Heart left ventricle (tissue), 16 donors: ENCODE measurements at regions of chr1 and their contacts with region 1.

Region 1: DNA sequence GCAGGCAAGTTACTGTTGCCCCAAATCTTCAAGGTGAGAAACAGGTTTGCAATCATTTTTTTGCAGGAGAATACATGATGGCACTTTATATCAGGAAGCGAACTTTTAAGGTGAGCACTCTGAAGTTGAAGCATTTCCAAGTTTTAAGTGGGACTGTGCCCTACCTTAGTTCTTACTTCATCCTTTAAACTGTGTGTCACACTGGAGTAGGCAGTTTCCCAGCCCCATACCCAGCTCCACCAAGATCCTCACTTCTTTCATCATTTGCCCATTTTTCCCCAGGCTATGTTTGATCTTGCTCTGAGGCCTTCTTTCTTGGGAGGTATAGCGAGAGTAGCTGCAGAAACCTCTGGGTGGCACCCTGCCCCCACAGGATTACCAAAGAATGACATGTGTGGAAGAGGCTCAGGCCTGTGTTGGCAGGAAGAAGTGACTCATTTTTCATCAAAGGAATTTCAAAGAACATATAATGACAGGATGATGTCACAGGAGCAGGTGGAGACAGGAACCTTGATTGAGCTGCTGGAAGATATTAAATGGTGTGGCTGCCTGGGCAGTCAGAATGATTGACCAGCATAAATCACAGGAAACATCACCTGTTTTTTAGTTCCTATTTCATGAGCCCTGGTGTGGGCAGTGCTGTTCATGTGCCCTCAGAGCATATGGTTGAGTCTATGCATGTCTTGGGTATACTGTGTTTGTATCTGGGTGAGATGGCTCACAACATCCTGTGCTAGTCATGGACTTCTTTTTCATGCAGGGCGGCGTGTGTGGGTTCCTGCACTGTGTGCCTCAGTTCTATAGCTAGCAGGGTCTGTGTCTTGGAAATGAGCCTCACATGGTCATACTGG is 20.8 kb upstream of the MACF1 start:
- DNase-seq: peak in 4 of 5 donors; percentile 32 to 62 (median 34)
- ATAC-seq: peak; percentile 66 to 86 (median 77)
- H3K4me3 ChIP-seq: no peak overlapping the region
- H3K27ac ChIP-seq: peak overlapping the region in 5 of 12 donors; percentile 33 to 72 (median 43)
- H3K4me1 ChIP-seq: peaks cover 2 to 37% (median 25%) of the 10 kb centered on the region in 12 donors
- H3K27me3 ChIP-seq: no peaks in the 10 kb centered on the region
- CTCF ChIP-seq: peak in 11 of 12 donors; percentile 11 to 56 (median 37)
- POLR2A ChIP-seq: no peak

Region 2: DNA sequence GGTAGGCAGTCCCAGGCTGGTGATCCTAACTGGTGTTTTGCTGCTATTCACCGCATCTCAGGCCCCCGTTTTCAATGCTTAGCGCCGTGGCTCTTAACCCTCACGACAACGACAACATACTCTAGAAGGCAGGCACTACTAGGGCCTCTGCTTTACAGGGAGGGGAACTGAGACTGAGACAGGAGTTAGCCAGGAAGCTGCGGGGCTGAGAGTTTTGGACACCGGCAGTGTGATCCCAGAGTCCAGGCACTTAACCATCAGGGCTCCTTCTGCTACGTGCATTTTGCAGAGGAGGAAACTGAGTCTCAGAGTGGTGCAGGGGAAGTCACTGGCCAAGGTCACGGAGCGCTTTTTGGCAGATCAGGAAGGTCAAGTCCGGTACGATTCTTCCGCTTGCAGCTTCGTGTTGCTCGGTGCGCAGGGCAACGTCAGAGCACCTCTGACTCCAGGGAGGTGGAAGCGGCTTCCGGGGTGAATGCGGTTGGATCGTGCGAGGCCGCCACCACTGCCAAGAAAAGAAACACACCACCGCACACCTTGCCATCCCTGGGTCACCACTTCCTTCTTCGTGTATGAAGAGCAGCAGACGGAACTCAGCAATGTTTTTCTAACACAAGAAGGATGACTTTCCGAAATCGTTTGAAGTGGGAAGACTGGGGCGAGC is 624.4 kb before region 1 on chr1:
- intact Hi-C with region 1: no loop called
- DNase-seq: peak in 2 of 5 donors; percentile 25 to 71
- ATAC-seq: peak in 3 of 4 donors; percentile 20 to 46 (median 32)
- H3K4me3 ChIP-seq: peak overlapping the region in 5 of 12 donors; percentile 13 to 30 (median 18)
- H3K27ac ChIP-seq: no peak overlapping the region
- H3K4me1 ChIP-seq: peaks cover 0 to 14% (median 0%) of the 10 kb centered on the region in 12 donors
- H3K27me3 ChIP-seq: peaks cover 4 to 51% (median 8%) of the 10 kb centered on the region in 9 donors
- CTCF ChIP-seq: no peak
- POLR2A ChIP-seq: no peak

Region 3: DNA sequence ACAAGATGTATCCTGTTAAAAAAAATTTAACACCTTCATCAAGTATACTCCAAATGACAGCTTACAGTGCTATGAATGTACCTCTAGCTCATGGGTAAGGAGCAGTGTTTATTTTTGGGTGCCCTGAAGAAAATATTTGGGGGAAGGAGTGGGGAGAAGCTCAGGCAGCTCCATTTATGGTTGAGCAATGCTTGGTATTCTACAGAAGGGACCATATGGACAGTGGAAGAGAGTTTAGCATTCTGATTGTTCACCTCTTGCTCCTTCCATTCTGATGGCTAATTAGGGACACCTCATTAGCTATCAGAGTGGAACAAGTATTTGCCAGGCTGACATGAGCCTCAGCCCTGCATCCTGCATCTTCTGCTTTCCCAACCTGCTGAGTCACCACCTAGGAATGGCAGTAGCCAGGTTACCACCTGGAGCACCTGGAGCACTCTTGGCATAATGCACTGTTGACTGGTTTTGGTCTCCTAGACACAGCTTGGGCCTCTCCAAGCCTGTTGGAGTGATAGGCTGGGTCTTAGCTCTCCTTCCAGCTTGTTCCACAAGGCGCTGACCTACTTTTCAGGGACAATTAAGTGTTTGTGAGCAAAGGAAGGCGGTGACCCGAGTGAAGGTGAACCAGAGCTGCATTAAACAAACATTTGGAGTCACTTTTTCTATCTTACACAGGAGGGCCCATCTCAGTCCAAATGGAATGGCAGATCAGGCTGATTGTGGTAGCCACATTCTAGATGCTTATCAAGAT is 41.2 kb before region 1 on chr1:
- intact Hi-C with region 1: loop called in 4 of 10 experiments (anchors 5 to 10 kb)
- DNase-seq: no peak
- ATAC-seq: peak in 3 of 4 donors; percentile 45 to 64 (median 54)
- H3K4me3 ChIP-seq: no peak overlapping the region
- H3K27ac ChIP-seq: peak overlapping the region in 4 of 12 donors; percentile 3 to 59 (median 30)
- H3K4me1 ChIP-seq: peaks cover 0 to 42% (median 23%) of the 10 kb centered on the region in 12 donors
- H3K27me3 ChIP-seq: no peaks in the 10 kb centered on the region
- CTCF ChIP-seq: no peak
- POLR2A ChIP-seq: no peak